GM12878 (cell line): ENCODE measurements at regions of chr4 and their contacts with region 1.

Region 1: GRCh38 chr4:25925486-25926201 is 11.6 kb downstream of the SMIM20 start:
- DNase-seq: no peak
- ATAC-seq: peak; percentile 94
- H3K4me3 ChIP-seq: no peak overlapping the region
- H3K27ac ChIP-seq: no peak overlapping the region
- H3K4me1 ChIP-seq: no peaks in the 10 kb centered on the region
- H3K27me3 ChIP-seq: no peaks in the 10 kb centered on the region
- CTCF ChIP-seq: peak; percentile 65 to 71 (median 69)
- EP300 ChIP-seq: no peak
- POLR2A ChIP-seq: no peak
- RAD21 ChIP-seq: peak; percentile 89

Region 2: GRCh38 chr4:25842229-25842845 is 83.3 kb before region 1 on chr4:
- CTCF ChIA-PET with region 1: interaction called, 16 read pairs
- POLR2A ChIA-PET with region 1: no interaction called
- RAD21 ChIA-PET with region 1: interaction called, 4 read pairs
- SMC1A ChIA-PET with region 1: interaction called, 10 read pairs
- in situ Hi-C with region 1: no loop called
- intact Hi-C with region 1: no loop called
- DNase-seq: peak; percentile 21
- ATAC-seq: peak; percentile 80
- H3K4me3 ChIP-seq: no peak overlapping the region
- H3K27ac ChIP-seq: no peak overlapping the region
- H3K4me1 ChIP-seq: peaks cover 31% of the 10 kb centered on the region
- H3K27me3 ChIP-seq: no peaks in the 10 kb centered on the region
- CTCF ChIP-seq: peak; percentile 43 to 53 (median 47); a peak in 5 of 6 replicates
- EP300 ChIP-seq: no peak
- POLR2A ChIP-seq: no peak
- RAD21 ChIP-seq: peak; percentile 85

Region 3: DNA sequence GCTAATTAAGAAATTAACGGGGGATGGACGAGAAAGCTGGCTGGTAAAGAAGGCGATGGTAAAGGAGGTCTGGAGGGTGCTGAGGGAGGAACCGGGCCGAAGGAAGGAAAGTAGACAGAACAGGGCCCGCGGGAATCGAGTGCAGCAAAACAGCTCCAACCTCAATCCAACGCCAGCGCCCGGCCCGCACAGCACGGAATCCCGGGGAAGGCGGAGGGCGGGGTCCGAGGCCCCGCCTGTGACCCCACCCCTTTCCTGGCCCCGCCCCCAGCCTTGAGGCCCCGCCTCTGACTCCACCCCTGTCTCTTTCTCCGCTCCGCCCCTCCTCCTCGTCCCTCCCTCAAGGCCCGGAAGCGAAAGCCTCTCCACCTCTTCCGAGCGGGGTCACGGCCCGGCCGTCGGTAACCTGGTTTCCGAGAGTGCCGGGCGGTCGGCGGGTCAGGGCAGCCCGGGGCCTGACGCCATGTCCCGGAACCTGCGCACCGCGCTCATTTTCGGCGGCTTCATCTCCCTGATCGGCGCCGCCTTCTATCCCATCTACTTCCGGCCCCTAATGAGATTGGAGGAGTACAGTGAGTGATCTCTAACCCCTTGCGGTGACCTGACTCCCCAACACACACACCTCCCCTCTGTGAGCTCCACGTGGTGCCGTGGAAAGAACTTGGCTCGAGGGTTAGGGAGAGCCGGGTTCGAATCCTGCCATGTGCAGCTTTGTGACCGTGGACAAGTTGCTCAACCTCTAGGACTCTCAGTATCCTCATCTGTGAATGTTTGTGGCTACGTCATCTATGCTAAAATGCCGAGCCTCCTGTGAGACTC is 11.6 kb before region 1 on chr4 and contains the start of gene SMIM20:
- CTCF ChIA-PET with region 1: interaction called, 20 read pairs
- POLR2A ChIA-PET with region 1: interaction called, 4 read pairs
- RAD21 ChIA-PET with region 1: no interaction called
- SMC1A ChIA-PET with region 1: interaction called, 3 read pairs
- in situ Hi-C with region 1: no loop called
- intact Hi-C with region 1: no loop called
- DNase-seq: peak; percentile 56
- ATAC-seq: peak; percentile 97
- H3K4me3 ChIP-seq: peak within 1 kb of the TSS; percentile 78
- H3K27ac ChIP-seq: peak within 1 kb of the TSS; percentile 84
- H3K4me1 ChIP-seq: peaks cover 18% of the 10 kb centered on the region
- H3K27me3 ChIP-seq: no peaks in the 10 kb centered on the region
- CTCF ChIP-seq: no peak
- EP300 ChIP-seq: no peak
- POLR2A ChIP-seq: peak; percentile 94
- RAD21 ChIP-seq: no peak
- polyA plus RNA-seq, gene SMIM20: 32.5 to 32.6 TPM

Region 4: GRCh38 chr4:25938787-25939186 is 13.1 kb after region 1 on chr4:
- CTCF ChIA-PET with region 1: interaction called, 11 read pairs
- POLR2A ChIA-PET with region 1: interaction called, 6 read pairs
- RAD21 ChIA-PET with region 1: no interaction called
- SMC1A ChIA-PET with region 1: interaction called, 8 read pairs
- in situ Hi-C with region 1: no loop called
- intact Hi-C with region 1: no loop called
- DNase-seq: peak; percentile 85
- ATAC-seq: peak; percentile 96
- H3K4me3 ChIP-seq: no peak overlapping the region; the same call in 1 of the 2 replicates
- H3K27ac ChIP-seq: no peak overlapping the region; the same call in 1 of the 2 replicates
- H3K4me1 ChIP-seq: peaks cover 11% of the 10 kb centered on the region; the same call in 1 of the 2 replicates
- H3K27me3 ChIP-seq: no peaks in the 10 kb centered on the region
- CTCF ChIP-seq: no peak
- EP300 ChIP-seq: peak in 1 of 2 experiments; percentile 50; a peak in 1 of 4 replicates
- POLR2A ChIP-seq: no peak
- RAD21 ChIP-seq: no peak

Region 5: DNA sequence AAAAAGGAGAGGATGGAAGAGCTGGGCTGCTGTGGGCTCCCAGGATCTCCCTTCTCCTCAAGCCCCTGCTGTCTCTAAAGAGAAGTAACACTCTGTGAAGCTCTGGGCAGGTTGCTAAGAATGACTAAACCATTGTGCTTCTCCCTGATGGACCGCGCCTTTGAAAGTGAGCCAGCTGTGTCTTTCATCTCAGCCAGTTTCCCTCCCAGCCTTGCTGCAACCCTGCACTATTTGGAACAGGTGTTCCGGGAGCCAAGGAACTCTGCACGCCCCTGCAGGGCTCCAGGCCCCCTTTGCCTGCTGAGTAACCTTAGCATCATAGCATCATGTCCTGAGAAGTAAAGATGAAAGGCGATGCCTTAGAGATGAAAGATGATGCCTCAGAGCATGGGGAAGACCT is 28.1 kb after region 1 on chr4:
- CTCF ChIA-PET with region 1: no interaction called
- POLR2A ChIA-PET with region 1: no interaction called
- RAD21 ChIA-PET with region 1: no interaction called
- SMC1A ChIA-PET with region 1: no interaction called
- in situ Hi-C with region 1: no loop called
- intact Hi-C with region 1: no loop called
- DNase-seq: no peak
- ATAC-seq: no peak
- H3K4me3 ChIP-seq: no peak overlapping the region
- H3K27ac ChIP-seq: no peak overlapping the region
- H3K4me1 ChIP-seq: no peaks in the 10 kb centered on the region
- H3K27me3 ChIP-seq: peaks cover 0 to 5% of the 10 kb centered on the region in 2 experiments; a peak in 1 of 4 replicates
- CTCF ChIP-seq: no peak
- EP300 ChIP-seq: no peak
- POLR2A ChIP-seq: no peak
- RAD21 ChIP-seq: no peak

Region 6: DNA sequence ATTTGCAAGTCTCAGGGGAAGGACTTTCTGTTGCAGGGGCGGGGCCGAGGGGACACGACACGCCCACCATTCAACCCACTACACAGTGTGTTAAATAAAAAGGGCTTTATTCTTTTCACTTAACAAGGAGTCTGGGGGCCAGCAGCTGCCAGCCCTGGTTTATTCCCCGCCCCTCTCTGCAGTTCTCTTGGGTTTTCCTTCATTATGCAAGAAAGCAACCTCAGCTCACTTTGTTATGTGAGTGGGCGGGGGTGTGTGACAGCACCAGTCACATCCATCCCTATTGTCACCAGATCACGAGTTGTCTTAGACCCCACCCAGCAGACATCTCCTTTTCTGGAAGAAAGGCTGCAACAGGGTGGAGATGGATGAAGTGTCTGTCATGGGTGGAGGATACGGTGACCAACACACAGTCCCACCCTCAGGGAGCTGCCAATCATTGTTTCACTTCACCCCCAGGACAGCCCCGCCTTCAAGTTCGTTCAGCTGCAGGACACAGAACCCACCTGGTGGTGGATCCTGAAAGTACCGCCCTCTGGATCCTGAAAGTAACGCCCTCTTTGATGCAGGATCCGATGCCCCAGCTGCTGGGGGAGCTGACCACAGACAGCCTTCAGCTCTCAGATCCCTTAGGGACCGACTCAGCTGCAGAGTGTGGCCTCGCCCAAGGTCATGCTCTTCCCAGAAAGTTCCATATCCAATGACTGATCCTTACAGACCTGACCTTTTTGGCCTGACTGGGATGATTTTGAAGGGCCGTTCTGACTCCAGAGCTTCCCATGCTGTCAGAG is 67.9 kb after region 1 on chr4:
- CTCF ChIA-PET with region 1: interaction called, 62 read pairs
- POLR2A ChIA-PET with region 1: no interaction called
- RAD21 ChIA-PET with region 1: no interaction called
- SMC1A ChIA-PET with region 1: interaction called, 12 read pairs
- in situ Hi-C with region 1: no loop called
- intact Hi-C with region 1: loop called (anchors 1 kb)
- DNase-seq: no peak
- ATAC-seq: peak; percentile 87
- H3K4me3 ChIP-seq: no peak overlapping the region
- H3K27ac ChIP-seq: no peak overlapping the region
- H3K4me1 ChIP-seq: 0 out of 2 replicates have a peak, but pooled peaks cover 5% of the 10 kb centered on the region
- H3K27me3 ChIP-seq: no peaks in the 10 kb centered on the region
- CTCF ChIP-seq: peak; percentile 28 to 41 (median 35); a peak in 5 of 6 replicates
- EP300 ChIP-seq: no peak
- POLR2A ChIP-seq: no peak
- RAD21 ChIP-seq: peak; percentile 52

Region 7: GRCh38 chr4:26325191-26325590 is 399.5 kb after region 1 on chr4:
- CTCF ChIA-PET with region 1: interaction called, 10 read pairs
- POLR2A ChIA-PET with region 1: no interaction called
- RAD21 ChIA-PET with region 1: interaction called, 3 read pairs
- SMC1A ChIA-PET with region 1: interaction called, 4 read pairs
- in situ Hi-C with region 1: no loop called
- intact Hi-C with region 1: no loop called
- DNase-seq: no peak
- ATAC-seq: peak; percentile 63
- H3K4me3 ChIP-seq: peak overlapping the region; percentile 10; the same call in 1 of the 2 replicates
- H3K27ac ChIP-seq: no peak overlapping the region
- H3K4me1 ChIP-seq: no peaks in the 10 kb centered on the region
- H3K27me3 ChIP-seq: no peaks in the 10 kb centered on the region
- CTCF ChIP-seq: peak; percentile 46 to 64 (median 56); a peak in 5 of 6 replicates
- EP300 ChIP-seq: no peak
- POLR2A ChIP-seq: no peak
- RAD21 ChIP-seq: peak; percentile 78